Naive thymus-derived CD4-positive, alpha-beta T cell (primary cell): ENCODE measurements at regions of chr15 and their contacts with region 1.

Region 1: GRCh38 chr15:31265871-31266711 is 60.5 kb upstream of the KLF13 start:
- DNase-seq: peak; percentile 43 to 90 (median 86)
- ATAC-seq: peak; percentile 84
- H3K4me3 ChIP-seq: peak overlapping the region; percentile 24
- H3K4me3 Mint-ChIP-seq: peak overlapping the region; percentile 71 to 95 (median 78)
- H3K27ac ChIP-seq: peak overlapping the region; percentile 81
- H3K27ac Mint-ChIP-seq: peak overlapping the region; percentile 94 to 100 (median 96)
- H3K4me1 ChIP-seq: peaks cover 48 to 88% of the 10 kb centered on the region in 2 donors
- H3K4me1 Mint-ChIP-seq: peaks cover 62 to 99% (median 96%) of the 10 kb centered on the region in 7 donors
- H3K27me3 ChIP-seq: no peaks in the 10 kb centered on the region
- H3K27me3 Mint-ChIP-seq: no peaks in the 10 kb centered on the region

Region 2: GRCh38 chr15:30941520-30941919 is 324.6 kb before region 1 on chr15:
- CTCF ChIA-PET with region 1: no interaction called
- POLR2A ChIA-PET with region 1: no interaction called
- intact Hi-C with region 1: no loop called
- DNase-seq: no peak
- ATAC-seq: no peak
- H3K4me3 ChIP-seq: no peak overlapping the region
- H3K4me3 Mint-ChIP-seq: no peak overlapping the region
- H3K27ac ChIP-seq: no peak overlapping the region
- H3K27ac Mint-ChIP-seq: peak overlapping the region in 2 of 9 donors; percentile 28 to 36
- H3K4me1 ChIP-seq: no peaks in the 10 kb centered on the region
- H3K4me1 Mint-ChIP-seq: no peaks in the 10 kb centered on the region
- H3K27me3 ChIP-seq: no peaks in the 10 kb centered on the region
- H3K27me3 Mint-ChIP-seq: no peaks in the 10 kb centered on the region

Region 3: DNA sequence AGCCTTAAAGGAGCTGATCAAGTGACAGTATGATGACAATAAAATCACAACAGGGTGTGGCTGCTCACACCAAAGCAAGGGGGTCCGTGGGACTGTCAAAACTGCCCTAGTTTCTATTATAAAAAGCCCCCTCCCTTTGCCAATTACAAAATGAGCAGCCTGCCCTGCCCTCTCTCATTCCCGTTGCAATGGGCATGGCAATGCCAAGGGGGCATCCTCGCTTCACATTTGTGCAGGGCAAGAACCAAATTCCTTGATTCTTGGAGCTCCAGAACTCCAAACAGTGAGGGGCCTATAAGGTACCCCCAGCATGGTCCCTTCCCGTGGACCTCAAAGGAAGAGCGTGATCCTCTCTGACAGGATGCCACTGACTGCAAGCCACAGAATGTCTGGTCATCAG is 59.7 kb before region 1 on chr15:
- CTCF ChIA-PET with region 1: interaction called, 3 read pairs
- POLR2A ChIA-PET with region 1: interaction called, 8 read pairs
- intact Hi-C with region 1: loop called in 1 of 2 experiments (anchors 1 kb)
- DNase-seq: no peak
- ATAC-seq: no peak
- H3K4me3 ChIP-seq: no peak overlapping the region
- H3K4me3 Mint-ChIP-seq: no peak overlapping the region
- H3K27ac ChIP-seq: no peak overlapping the region
- H3K27ac Mint-ChIP-seq: peak overlapping the region in 1 of 9 donors; percentile 4
- H3K4me1 ChIP-seq: peaks cover 13 to 46% of the 10 kb centered on the region in 2 donors
- H3K4me1 Mint-ChIP-seq: peaks cover 10 to 53% (median 46%) of the 10 kb centered on the region in 7 donors
- H3K27me3 ChIP-seq: no peaks in the 10 kb centered on the region
- H3K27me3 Mint-ChIP-seq: peaks cover 0 to 12% (median 0%) of the 10 kb centered on the region in 5 donors

Region 4: GRCh38 chr15:31236184-31237042 is 29.7 kb before region 1 on chr15:
- CTCF ChIA-PET with region 1: interaction called, 6 read pairs
- POLR2A ChIA-PET with region 1: interaction called, 59 read pairs
- intact Hi-C with region 1: no loop called
- DNase-seq: no peak
- ATAC-seq: no peak
- H3K4me3 ChIP-seq: no peak overlapping the region
- H3K4me3 Mint-ChIP-seq: no peak overlapping the region
- H3K27ac ChIP-seq: no peak overlapping the region
- H3K27ac Mint-ChIP-seq: peak overlapping the region in 1 of 9 donors; percentile 23
- H3K4me1 ChIP-seq: peaks cover 3 to 19% of the 10 kb centered on the region in 2 donors
- H3K4me1 Mint-ChIP-seq: peaks cover 25 to 40% (median 29%) of the 10 kb centered on the region in 7 donors
- H3K27me3 ChIP-seq: no peaks in the 10 kb centered on the region
- H3K27me3 Mint-ChIP-seq: peaks cover 0 to 14% (median 0%) of the 10 kb centered on the region in 5 donors

Region 5: DNA sequence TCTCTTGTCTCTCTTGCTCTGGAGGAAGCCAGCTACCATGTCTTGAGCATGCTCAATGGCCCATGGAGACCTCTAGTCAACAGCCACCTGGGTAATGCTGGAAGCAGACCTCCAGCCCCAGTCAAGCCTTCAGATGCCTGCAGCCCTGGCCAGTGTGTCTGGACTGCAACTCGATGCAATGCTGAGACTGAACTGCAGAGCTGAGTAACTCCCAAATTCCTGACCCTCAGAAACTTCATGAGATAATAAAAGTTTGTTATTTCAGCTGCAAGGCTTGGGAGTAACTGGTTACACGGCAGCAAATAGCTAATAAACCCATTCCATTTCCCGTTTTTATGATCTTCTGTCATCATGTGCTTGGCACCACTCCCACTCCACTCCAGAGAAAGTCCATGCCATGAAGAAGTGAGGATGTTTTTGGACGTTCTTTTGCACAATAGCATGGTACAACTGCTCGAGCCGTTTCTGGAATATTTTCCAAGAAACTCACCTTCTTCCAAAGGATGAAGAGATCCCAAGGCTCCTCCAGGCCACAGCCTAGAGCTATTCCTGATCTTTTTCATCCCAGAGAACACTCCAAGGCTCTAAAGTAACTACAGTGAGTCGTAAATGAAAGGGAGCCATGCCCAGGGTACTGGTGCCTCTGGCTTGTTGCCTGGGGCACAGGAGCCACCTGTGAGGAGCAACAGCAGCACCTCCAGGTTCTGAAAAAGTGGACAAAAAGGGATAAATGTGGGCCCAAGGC is 11.5 kb before region 1 on chr15:
- CTCF ChIA-PET with region 1: interaction called, 7 read pairs
- POLR2A ChIA-PET with region 1: interaction called, 37 read pairs
- intact Hi-C with region 1: loop called in 1 of 2 experiments (anchors 1 kb)
- DNase-seq: no peak
- ATAC-seq: no peak
- H3K4me3 ChIP-seq: no peak overlapping the region
- H3K4me3 Mint-ChIP-seq: no peak overlapping the region
- H3K27ac ChIP-seq: no peak overlapping the region
- H3K27ac Mint-ChIP-seq: peak overlapping the region in 4 of 9 donors; percentile 6 to 70 (median 60)
- H3K4me1 ChIP-seq: peaks cover 8 to 14% of the 10 kb centered on the region in 2 donors
- H3K4me1 Mint-ChIP-seq: peaks cover 26 to 48% (median 34%) of the 10 kb centered on the region in 7 donors
- H3K27me3 ChIP-seq: no peaks in the 10 kb centered on the region
- H3K27me3 Mint-ChIP-seq: peaks cover 0 to 20% (median 0%) of the 10 kb centered on the region in 5 donors

Region 6: GRCh38 chr15:31302778-31303725 is 37.0 kb after region 1 on chr15:
- CTCF ChIA-PET with region 1: interaction called, 6 read pairs
- POLR2A ChIA-PET with region 1: interaction called, 7 read pairs
- intact Hi-C with region 1: loop called (anchors 1 to 5 kb)
- DNase-seq: peak in 2 of 9 donors; percentile 30 to 44
- ATAC-seq: peak; percentile 63
- H3K4me3 ChIP-seq: no peak overlapping the region
- H3K4me3 Mint-ChIP-seq: peak overlapping the region in 3 of 10 donors; percentile 5 to 51 (median 15)
- H3K27ac ChIP-seq: no peak overlapping the region
- H3K27ac Mint-ChIP-seq: peak overlapping the region in 7 of 9 donors; percentile 22 to 75 (median 61)
- H3K4me1 ChIP-seq: peaks cover 0 to 31% of the 10 kb centered on the region in 2 donors
- H3K4me1 Mint-ChIP-seq: peaks cover 17 to 52% (median 35%) of the 10 kb centered on the region in 7 donors
- H3K27me3 ChIP-seq: no peaks in the 10 kb centered on the region
- H3K27me3 Mint-ChIP-seq: peaks cover 0 to 6% (median 0%) of the 10 kb centered on the region in 5 donors

Region 7: GRCh38 chr15:31590609-31591008 is 324.5 kb after region 1 on chr15:
- CTCF ChIA-PET with region 1: no interaction called
- POLR2A ChIA-PET with region 1: no interaction called
- intact Hi-C with region 1: no loop called
- DNase-seq: no peak
- ATAC-seq: no peak
- H3K4me3 ChIP-seq: no peak overlapping the region
- H3K4me3 Mint-ChIP-seq: no peak overlapping the region
- H3K27ac ChIP-seq: no peak overlapping the region
- H3K27ac Mint-ChIP-seq: no peak overlapping the region
- H3K4me1 ChIP-seq: no peaks in the 10 kb centered on the region
- H3K4me1 Mint-ChIP-seq: no peaks in the 10 kb centered on the region
- H3K27me3 ChIP-seq: peaks cover 0 to 4% of the 10 kb centered on the region in 2 donors
- H3K27me3 Mint-ChIP-seq: peaks cover 0 to 21% (median 13%) of the 10 kb centered on the region in 5 donors